ENCODE measurements at regions of chr13 and their contacts with region 1.

Region 1: GRCh38 chr13:114219392-114219791 is 15.3 kb upstream of the CDC16 start:
- DNase-seq: peak; percentile 73
- H3K4me3 ChIP-seq: no peak overlapping the region
- H3K27ac ChIP-seq: no peak overlapping the region
- H3K4me1 ChIP-seq: peaks cover 26% of the 10 kb centered on the region
- H3K27me3 ChIP-seq: no peaks in the 10 kb centered on the region
- CTCF ChIP-seq: no peak
- POLR2A ChIP-seq: no peak

Region 2: GRCh38 chr13:113907635-113908617 is 311.5 kb before region 1 on chr13:
- CTCF ChIA-PET with region 1: no interaction called
- POLR2A ChIA-PET with region 1: no interaction called
- dilution Hi-C with region 1: no loop called
- intact Hi-C with region 1: no loop called
- DNase-seq: no peak
- H3K4me3 ChIP-seq: no peak overlapping the region
- H3K27ac ChIP-seq: no peak overlapping the region
- H3K4me1 ChIP-seq: no peaks in the 10 kb centered on the region
- H3K27me3 ChIP-seq: peaks cover 16 to 25% of the 10 kb centered on the region in 2 experiments
- CTCF ChIP-seq: no peak
- POLR2A ChIP-seq: no peak

Region 3: DNA sequence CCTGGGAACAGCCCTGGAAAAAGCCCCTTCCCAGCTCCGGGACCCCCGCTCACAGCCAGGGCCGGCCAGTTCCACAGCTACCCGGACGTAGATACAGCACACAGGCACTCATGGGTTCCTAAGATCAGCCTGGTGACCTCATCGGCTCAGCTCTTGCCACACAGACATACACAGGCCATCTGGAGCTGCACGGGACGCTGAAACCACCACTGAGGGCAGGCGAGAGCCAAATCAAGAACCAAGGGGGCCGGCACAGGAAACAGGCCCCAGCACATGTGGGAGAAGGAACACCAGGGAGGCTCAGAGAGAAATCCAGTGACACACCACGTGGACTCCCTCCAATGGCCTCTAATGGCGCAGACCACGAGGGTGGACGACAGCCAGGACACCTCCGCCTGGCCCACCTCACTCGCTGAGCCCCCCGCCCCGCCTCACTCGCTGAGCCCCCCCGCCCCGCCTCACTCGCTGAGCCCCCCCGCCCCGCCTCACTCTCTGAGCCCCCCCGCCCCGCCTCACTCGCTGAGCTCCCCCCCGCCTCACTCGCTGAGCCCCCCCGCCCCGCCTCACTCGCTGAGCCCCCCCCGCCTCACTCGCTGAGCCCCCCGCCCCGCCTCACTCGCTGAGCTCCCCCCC is 175.9 kb before region 1 on chr13:
- CTCF ChIA-PET with region 1: no interaction called
- POLR2A ChIA-PET with region 1: no interaction called
- dilution Hi-C with region 1: no loop called
- intact Hi-C with region 1: no loop called
- DNase-seq: no peak
- H3K4me3 ChIP-seq: no peak overlapping the region
- H3K27ac ChIP-seq: no peak overlapping the region
- H3K4me1 ChIP-seq: no peaks in the 10 kb centered on the region
- H3K27me3 ChIP-seq: no peaks in the 10 kb centered on the region
- CTCF ChIP-seq: no peak
- POLR2A ChIP-seq: no peak

Region 4: GRCh38 chr13:114161644-114162532 is 57.5 kb before region 1 on chr13:
- CTCF ChIA-PET with region 1: interaction called, 9 read pairs
- POLR2A ChIA-PET with region 1: no interaction called
- dilution Hi-C with region 1: no loop called
- intact Hi-C with region 1: loop called (anchors 1 kb)
- DNase-seq: peak; percentile 55
- H3K4me3 ChIP-seq: no peak overlapping the region
- H3K27ac ChIP-seq: peak overlapping the region; percentile 63
- H3K4me1 ChIP-seq: peaks cover 25% of the 10 kb centered on the region
- H3K27me3 ChIP-seq: peaks cover 4 to 9% of the 10 kb centered on the region in 2 experiments
- CTCF ChIP-seq: no peak
- POLR2A ChIP-seq: no peak

Region 5: GRCh38 chr13:114203536-114203935 is 15.9 kb before region 1 on chr13:
- CTCF ChIA-PET with region 1: no interaction called
- POLR2A ChIA-PET with region 1: no interaction called
- dilution Hi-C with region 1: no loop called
- intact Hi-C with region 1: no loop called
- DNase-seq: no peak
- H3K4me3 ChIP-seq: no peak overlapping the region
- H3K27ac ChIP-seq: no peak overlapping the region
- H3K4me1 ChIP-seq: no peaks in the 10 kb centered on the region
- H3K27me3 ChIP-seq: peaks cover 19 to 35% of the 10 kb centered on the region in 2 experiments
- CTCF ChIP-seq: no peak
- POLR2A ChIP-seq: no peak

Measured in endothelial cell of umbilical vein (primary cell).